Endothelial cell of umbilical vein (primary cell): ENCODE measurements at regions of chr10 and their contacts with region 1.

Region 1: GRCh38 chr10:90197766-90198165 is 496.4 kb downstream of the KIF20B start:
- DNase-seq: peak; percentile 28
- H3K4me3 ChIP-seq: no peak overlapping the region
- H3K27ac ChIP-seq: no peak overlapping the region
- H3K4me1 ChIP-seq: peaks cover 13% of the 10 kb centered on the region
- H3K27me3 ChIP-seq: no peaks in the 10 kb centered on the region
- CTCF ChIP-seq: no peak
- POLR2A ChIP-seq: no peak

Region 2: GRCh38 chr10:90179696-90180407 is 17.9 kb before region 1 on chr10:
- CTCF ChIA-PET with region 1: no interaction called
- POLR2A ChIA-PET with region 1: no interaction called
- dilution Hi-C with region 1: no loop called
- intact Hi-C with region 1: no loop called
- DNase-seq: no peak
- H3K4me3 ChIP-seq: no peak overlapping the region
- H3K27ac ChIP-seq: no peak overlapping the region
- H3K4me1 ChIP-seq: no peaks in the 10 kb centered on the region
- H3K27me3 ChIP-seq: no peaks in the 10 kb centered on the region
- CTCF ChIP-seq: no peak
- POLR2A ChIP-seq: no peak

Region 3: DNA sequence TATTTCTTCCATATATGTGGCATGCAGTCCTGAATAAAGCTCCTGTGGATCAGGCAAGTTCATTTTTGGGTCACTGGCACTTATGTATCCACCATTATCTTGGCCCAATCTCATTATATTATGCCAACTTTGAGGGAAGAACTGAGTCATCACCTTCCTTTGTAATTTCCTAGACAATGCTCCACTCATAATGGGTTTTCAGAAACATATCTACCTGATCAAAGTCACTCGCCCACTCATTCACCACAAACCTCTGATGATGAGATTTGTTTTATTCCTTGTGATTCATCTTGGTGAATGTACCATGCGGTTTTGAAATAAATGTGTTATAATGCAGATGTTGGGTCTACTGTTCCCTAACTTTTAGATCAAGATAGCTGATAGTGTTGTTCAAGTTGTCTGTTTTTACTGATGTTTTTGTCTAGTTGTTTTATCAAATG is 29.5 kb after region 1 on chr10:
- CTCF ChIA-PET with region 1: interaction called, 5 read pairs
- POLR2A ChIA-PET with region 1: no interaction called
- dilution Hi-C with region 1: no loop called
- intact Hi-C with region 1: loop called (anchors 1 kb)
- DNase-seq: peak; percentile 88
- H3K4me3 ChIP-seq: no peak overlapping the region
- H3K27ac ChIP-seq: peak overlapping the region; percentile 66
- H3K4me1 ChIP-seq: peaks cover 26% of the 10 kb centered on the region
- H3K27me3 ChIP-seq: no peaks in the 10 kb centered on the region
- CTCF ChIP-seq: no peak
- POLR2A ChIP-seq: no peak

Region 4: DNA sequence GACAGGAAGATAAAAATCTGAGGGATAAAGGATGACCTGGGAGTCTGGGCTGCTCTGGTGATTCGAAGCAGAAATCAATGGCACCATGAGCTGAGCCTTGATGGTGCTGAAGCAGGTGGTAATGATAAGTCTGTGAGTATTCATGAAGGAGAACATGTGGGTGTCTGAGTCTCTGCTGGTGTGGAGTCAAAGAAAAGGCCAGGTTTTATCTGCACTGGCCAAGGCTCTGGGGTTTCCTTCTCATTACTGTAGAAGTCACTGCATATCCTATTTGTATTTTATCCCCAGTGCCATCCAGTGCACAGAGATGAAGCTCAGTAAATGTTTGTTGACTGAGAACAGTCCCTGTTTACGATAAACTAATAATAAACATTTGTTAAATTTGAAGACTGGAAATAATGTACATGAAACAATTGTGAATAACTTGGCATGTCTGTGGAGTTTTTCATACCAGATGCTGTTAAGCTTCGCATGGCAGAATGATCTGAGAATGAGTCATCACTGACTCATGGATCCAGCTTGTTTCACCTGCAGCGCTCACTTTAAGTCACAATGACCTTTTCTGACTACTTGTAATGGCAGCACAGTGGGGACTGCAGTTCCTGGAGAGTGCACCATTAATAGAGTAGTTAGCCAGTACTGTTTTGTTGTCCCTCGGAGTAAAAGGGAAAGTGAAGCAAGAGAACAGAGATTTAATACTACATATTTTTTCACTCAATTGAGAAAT is 121.6 kb after region 1 on chr10:
- CTCF ChIA-PET with region 1: no interaction called
- POLR2A ChIA-PET with region 1: no interaction called
- dilution Hi-C with region 1: no loop called
- intact Hi-C with region 1: loop called (anchors 2 kb)
- DNase-seq: peak; percentile 92
- H3K4me3 ChIP-seq: no peak overlapping the region
- H3K27ac ChIP-seq: peak overlapping the region; percentile 6
- H3K4me1 ChIP-seq: peaks cover 26% of the 10 kb centered on the region
- H3K27me3 ChIP-seq: no peaks in the 10 kb centered on the region
- CTCF ChIP-seq: no peak
- POLR2A ChIP-seq: no peak

Region 5: GRCh38 chr10:90394306-90394705 is 196.5 kb after region 1 on chr10:
- CTCF ChIA-PET with region 1: no interaction called
- POLR2A ChIA-PET with region 1: no interaction called
- dilution Hi-C with region 1: no loop called
- intact Hi-C with region 1: no loop called
- DNase-seq: no peak
- H3K4me3 ChIP-seq: no peak overlapping the region
- H3K27ac ChIP-seq: no peak overlapping the region
- H3K4me1 ChIP-seq: peaks cover 7% of the 10 kb centered on the region
- H3K27me3 ChIP-seq: no peaks in the 10 kb centered on the region
- CTCF ChIP-seq: no peak
- POLR2A ChIP-seq: no peak